Spleen (tissue), 13 donors: ENCODE measurements at regions of chr19 and their contacts with region 1.

Region 1: GRCh38 chr19:41263850-41264580 is at the start of gene HNRNPUL1:
- DNase-seq: peak; percentile 98
- H3K4me3 ChIP-seq: peak within 1 kb of the TSS; percentile 73 to 89 (median 85)
- H3K27ac ChIP-seq: peak within 1 kb of the TSS; percentile 96 to 100 (median 99)
- H3K4me1 ChIP-seq: peaks cover 21 to 54% (median 46%) of the 10 kb centered on the region in 6 donors
- H3K27me3 ChIP-seq: no peaks in the 10 kb centered on the region
- CTCF ChIP-seq: peak in 5 of 11 experiments; percentile 16 to 53 (median 27)
- POLR2A ChIP-seq: peak in 1 of 3 donors; percentile 81
- total RNA-seq, gene HNRNPUL1: 161 to 213 (median 178) TPM

Region 2: GRCh38 chr19:41206926-41207750 is 56.9 kb before region 1 on chr19:
- intact Hi-C with region 1: loop called (anchors 5 kb)
- DNase-seq: no peak
- H3K4me3 ChIP-seq: no peak overlapping the region
- H3K27ac ChIP-seq: peak overlapping the region in 5 of 8 donors; percentile 32 to 50 (median 43)
- H3K4me1 ChIP-seq: peaks cover 0 to 9% (median 2%) of the 10 kb centered on the region in 6 donors
- H3K27me3 ChIP-seq: peaks cover 0 to 11% (median 0%) of the 10 kb centered on the region in 7 donors
- CTCF ChIP-seq: no peak
- POLR2A ChIP-seq: no peak

Region 3: GRCh38 chr19:41226053-41226873 is 37.8 kb before region 1 on chr19:
- intact Hi-C with region 1: no loop called
- DNase-seq: no peak
- H3K4me3 ChIP-seq: peak overlapping the region; percentile 1 to 65 (median 34)
- H3K27ac ChIP-seq: peak overlapping the region in 7 of 8 donors; percentile 36 to 79 (median 70)
- H3K4me1 ChIP-seq: peaks cover 0 to 41% (median 16%) of the 10 kb centered on the region in 6 donors
- H3K27me3 ChIP-seq: peaks cover 0 to 73% (median 15%) of the 10 kb centered on the region in 7 donors
- CTCF ChIP-seq: peak in 1 of 11 experiments; percentile 19
- POLR2A ChIP-seq: no peak

Region 4: GRCh38 chr19:41298348-41298964 is 34.4 kb after region 1 on chr19:
- intact Hi-C with region 1: no loop called
- DNase-seq: no peak
- H3K4me3 ChIP-seq: peak overlapping the region in 2 of 8 donors; percentile 5 to 24
- H3K27ac ChIP-seq: peak overlapping the region; percentile 70 to 98 (median 86)
- H3K4me1 ChIP-seq: peaks cover 46 to 82% (median 74%) of the 10 kb centered on the region in 6 donors
- H3K27me3 ChIP-seq: no peaks in the 10 kb centered on the region
- CTCF ChIP-seq: no peak
- POLR2A ChIP-seq: no peak

Region 5: GRCh38 chr19:41310033-41310758 is 46.2 kb after region 1 on chr19 and contains the start of gene CCDC97:
- intact Hi-C with region 1: loop called (anchors 5 kb)
- DNase-seq: peak; percentile 96
- H3K4me3 ChIP-seq: peak within 1 kb of the TSS; percentile 56 to 86 (median 72)
- H3K27ac ChIP-seq: peak within 1 kb of the TSS; percentile 88 to 98 (median 97)
- H3K4me1 ChIP-seq: peaks cover 48 to 93% (median 69%) of the 10 kb centered on the region in 6 donors
- H3K27me3 ChIP-seq: no peaks in the 10 kb centered on the region
- CTCF ChIP-seq: peak in 1 of 11 experiments; percentile 20
- POLR2A ChIP-seq: peak; percentile 51 to 67 (median 59)
- total RNA-seq, gene CCDC97: 20.5 to 38.2 (median 29.7) TPM

Region 6: GRCh38 chr19:42066075-42066754 is 802.2 kb after region 1 on chr19:
- intact Hi-C with region 1: no loop called
- DNase-seq: no peak
- H3K4me3 ChIP-seq: no peak overlapping the region
- H3K27ac ChIP-seq: no peak overlapping the region
- H3K4me1 ChIP-seq: peaks cover 0 to 23% (median 14%) of the 10 kb centered on the region in 6 donors
- H3K27me3 ChIP-seq: peaks cover 0 to 61% (median 21%) of the 10 kb centered on the region in 7 donors
- CTCF ChIP-seq: no peak
- POLR2A ChIP-seq: no peak